ENCODE measurements at regions of chr9 and their contacts with region 1.

Region 1: DNA sequence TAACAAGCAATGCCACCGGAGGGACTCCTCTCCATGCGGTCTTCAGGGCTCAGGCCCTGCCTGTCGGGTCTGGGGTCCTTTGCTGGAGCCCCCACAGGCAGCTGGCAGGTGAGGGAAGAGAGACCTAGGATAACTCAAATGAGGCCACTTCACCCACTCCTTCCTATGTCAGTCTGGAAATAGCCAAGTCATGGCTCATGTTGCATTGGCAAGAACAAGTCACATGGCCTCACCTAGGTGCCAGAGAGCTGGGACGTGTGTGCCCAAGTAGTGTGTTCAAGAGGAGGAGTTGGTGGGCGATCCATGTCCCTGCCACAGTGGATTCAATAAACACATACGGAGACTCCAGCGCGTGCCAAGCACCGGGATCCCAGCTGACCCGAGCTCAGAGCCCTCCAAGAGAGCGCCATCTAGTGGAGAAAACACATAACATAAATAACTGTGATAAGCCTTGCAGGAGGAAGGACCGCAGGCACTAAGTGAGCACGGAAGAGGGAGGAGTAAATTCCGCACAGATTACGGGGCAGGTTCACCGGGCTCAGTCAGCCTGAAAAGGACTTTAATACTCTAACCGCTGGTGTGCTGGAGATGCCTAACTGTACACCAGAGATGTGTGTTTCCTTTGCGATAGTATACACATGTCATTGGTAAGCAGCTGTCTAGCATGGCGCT is 580.8 kb downstream of the CCDC171 start:
- DNase-seq: peak; percentile 56 to 81 (median 76)
- ATAC-seq: peak; percentile 53 to 66
- H3K4me3 ChIP-seq: no peak overlapping the region
- H3K27ac ChIP-seq: no peak overlapping the region
- H3K4me1 ChIP-seq: peaks cover 1% of the 10 kb centered on the region
- H3K27me3 ChIP-seq: no peaks in the 10 kb centered on the region

Region 2: DNA sequence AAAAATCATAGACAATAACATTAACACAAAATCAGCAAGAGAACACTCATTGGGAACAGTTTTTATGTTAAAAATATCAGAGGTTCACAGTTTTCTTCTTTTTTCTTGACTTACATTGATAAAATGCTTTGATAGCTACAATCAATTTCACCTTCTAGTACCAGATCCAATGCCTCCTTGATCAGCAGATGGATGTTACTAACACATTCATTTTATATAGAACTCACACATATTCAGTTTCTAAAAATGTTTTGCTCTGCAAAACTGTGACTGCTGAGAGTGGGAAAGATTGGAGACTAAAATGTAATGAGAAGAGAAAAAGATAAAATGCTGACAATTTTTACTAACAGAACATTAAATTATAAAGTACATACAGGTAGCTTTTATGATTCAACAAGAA is 969.8 kb before region 1 on chr9:
- intact Hi-C with region 1: no loop called
- DNase-seq: no peak
- ATAC-seq: no peak
- H3K4me3 ChIP-seq: no peak overlapping the region
- H3K27ac ChIP-seq: no peak overlapping the region
- H3K4me1 ChIP-seq: no peaks in the 10 kb centered on the region
- H3K27me3 ChIP-seq: no peaks in the 10 kb centered on the region

Region 3: DNA sequence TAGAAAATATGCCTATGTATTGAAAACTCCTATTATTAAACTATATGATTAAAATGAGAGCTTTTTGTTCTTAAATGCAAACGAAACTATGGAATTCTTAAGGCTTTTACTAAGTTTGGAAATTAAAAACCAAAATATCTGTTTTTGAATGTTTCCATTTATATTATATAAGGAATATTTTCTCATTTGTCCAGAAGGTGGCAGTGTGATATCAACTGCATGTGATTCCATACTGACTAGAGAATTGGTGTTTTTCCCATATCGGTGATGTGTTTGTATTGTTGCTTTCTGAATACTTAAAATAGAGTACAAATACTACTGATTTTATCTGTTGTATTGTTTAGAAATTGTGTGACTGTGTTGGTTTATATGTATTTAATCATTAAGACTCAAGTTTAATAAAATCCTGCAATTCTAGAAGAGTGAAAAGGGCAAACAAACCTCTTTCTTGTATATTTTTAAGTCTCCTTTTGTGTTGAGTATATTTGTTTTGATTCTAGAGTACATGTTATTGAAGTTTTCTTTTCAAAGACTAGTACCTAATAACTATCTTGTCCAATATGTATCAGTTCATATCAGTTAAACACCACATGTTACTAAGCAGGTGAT is 260.0 kb before region 1 on chr9:
- intact Hi-C with region 1: loop called in 2 of 4 experiments (anchors 5 to 10 kb)
- DNase-seq: no peak
- ATAC-seq: no peak
- H3K4me3 ChIP-seq: no peak overlapping the region
- H3K27ac ChIP-seq: no peak overlapping the region
- H3K4me1 ChIP-seq: no peaks in the 10 kb centered on the region
- H3K27me3 ChIP-seq: no peaks in the 10 kb centered on the region

Region 4: DNA sequence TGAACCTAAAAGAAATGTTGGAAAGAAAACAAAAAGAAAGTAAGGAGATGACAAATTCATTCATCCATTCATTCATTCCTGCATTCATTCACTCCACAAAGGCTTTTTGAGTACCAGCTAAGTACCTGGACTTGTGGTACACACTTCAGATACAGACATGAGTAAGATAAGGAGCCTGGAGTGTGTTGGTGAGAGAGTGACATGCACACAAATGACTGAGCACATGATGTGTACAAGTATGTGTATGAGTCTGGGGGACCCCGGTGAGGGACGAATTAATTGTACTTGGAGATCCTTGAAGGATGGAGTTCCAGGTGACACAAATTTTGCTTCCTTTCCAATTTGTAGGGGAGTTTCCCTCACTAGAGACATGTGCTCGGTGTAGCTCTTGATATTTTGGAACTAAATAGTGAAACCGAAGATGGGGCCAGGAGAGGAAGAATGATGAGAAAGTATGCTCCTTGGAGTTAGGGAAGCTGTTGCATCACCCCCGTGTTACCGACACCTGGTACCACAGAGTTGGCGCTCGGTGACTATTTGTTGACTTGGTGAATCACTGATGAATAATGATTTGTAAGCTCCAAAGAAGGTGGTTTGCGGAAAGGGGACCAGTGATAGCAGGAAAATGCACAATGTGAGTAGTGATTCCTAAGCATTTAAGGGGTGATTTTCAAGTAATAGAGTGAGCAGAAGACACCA is 71.0 kb before region 1 on chr9:
- intact Hi-C with region 1: loop called in 1 of 4 experiments (anchors 5 kb)
- DNase-seq: no peak
- ATAC-seq: no peak
- H3K4me3 ChIP-seq: no peak overlapping the region
- H3K27ac ChIP-seq: no peak overlapping the region
- H3K4me1 ChIP-seq: no peaks in the 10 kb centered on the region
- H3K27me3 ChIP-seq: no peaks in the 10 kb centered on the region

Region 5: GRCh38 chr9:16074963-16075362 is 58.7 kb before region 1 on chr9:
- intact Hi-C with region 1: no loop called
- DNase-seq: no peak
- ATAC-seq: peak in 1 of 2 donors; percentile 10
- H3K4me3 ChIP-seq: no peak overlapping the region
- H3K27ac ChIP-seq: no peak overlapping the region
- H3K4me1 ChIP-seq: no peaks in the 10 kb centered on the region
- H3K27me3 ChIP-seq: peaks cover 2% of the 10 kb centered on the region

Region 6: DNA sequence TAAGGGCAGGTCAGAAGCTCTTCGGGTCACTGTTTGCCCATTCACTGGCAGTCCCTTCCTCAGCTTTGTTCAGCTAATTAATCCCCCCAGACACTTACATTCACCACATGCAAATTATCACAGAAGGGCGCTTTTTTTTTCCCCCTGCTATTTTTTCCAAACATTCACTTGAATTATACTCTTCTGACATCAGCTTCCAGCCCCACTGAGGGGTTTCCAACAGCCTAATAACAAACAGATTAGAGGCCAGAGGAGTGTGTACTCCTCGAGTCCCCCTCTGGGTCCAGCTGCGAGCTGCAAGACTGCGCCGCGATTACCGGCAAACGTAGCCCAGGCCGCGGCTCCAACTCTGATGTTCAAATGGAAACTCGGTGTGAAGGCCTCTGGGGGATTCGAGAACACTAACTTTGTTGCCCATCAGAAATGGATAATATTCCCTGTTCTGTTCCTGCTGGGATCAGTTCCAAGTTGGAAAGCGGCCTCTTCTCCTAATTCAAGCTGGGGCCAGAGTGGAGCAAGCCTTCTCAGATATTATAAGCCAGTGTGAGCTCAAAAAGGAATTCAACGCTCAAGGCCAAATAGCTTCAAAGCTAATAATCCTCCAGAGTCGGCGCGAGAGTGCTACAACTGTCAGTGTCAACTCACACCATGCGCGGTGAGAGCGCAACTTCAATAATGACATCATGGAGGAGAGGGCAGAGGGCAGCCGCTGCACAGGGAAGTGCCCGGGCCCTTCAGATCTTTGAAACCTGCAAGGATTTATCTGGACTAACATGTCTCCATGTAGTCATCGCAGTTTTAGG is 176.0 kb after region 1 on chr9:
- intact Hi-C with region 1: no loop called
- DNase-seq: peak; percentile 51 to 82 (median 80)
- ATAC-seq: peak; percentile 78 to 81
- H3K4me3 ChIP-seq: no peak overlapping the region
- H3K27ac ChIP-seq: peak overlapping the region; percentile 17
- H3K4me1 ChIP-seq: peaks cover 2% of the 10 kb centered on the region
- H3K27me3 ChIP-seq: no peaks in the 10 kb centered on the region